K562 (cell line): ENCODE measurements at regions of chr12 and their contacts with region 1.

Region 1: GRCh38 chr12:76621582-76622024 is 62.0 kb upstream of the OSBPL8 start:
- DNase-seq: peak; percentile 66 to 80 (median 70)
- ATAC-seq: peak; percentile 91
- H3K4me3 ChIP-seq: no peak overlapping the region
- H3K27ac ChIP-seq: no peak overlapping the region
- H3K4me1 ChIP-seq: no peaks in the 10 kb centered on the region
- H3K27me3 ChIP-seq: 0 out of 5 replicates have a peak, but pooled peaks cover 0 to 3% of the 10 kb centered on the region in 2 experiments
- CTCF ChIP-seq: peak; percentile 80 to 97 (median 85)
- EP300 ChIP-seq: no peak
- POLR2A ChIP-seq: no peak
- RAD21 ChIP-seq: peak; percentile 98

Region 2: GRCh38 chr12:76426160-76426559 is 195.4 kb before region 1 on chr12:
- CTCF ChIA-PET with region 1: no interaction called
- POLR2A ChIA-PET with region 1: no interaction called
- in situ Hi-C with region 1: no loop called
- intact Hi-C with region 1: no loop called
- DNase-seq: no peak
- ATAC-seq: no peak
- H3K4me3 ChIP-seq: no peak overlapping the region
- H3K27ac ChIP-seq: no peak overlapping the region
- H3K4me1 ChIP-seq: no peaks in the 10 kb centered on the region
- H3K27me3 ChIP-seq: no peaks in the 10 kb centered on the region
- CTCF ChIP-seq: no peak
- EP300 ChIP-seq: no peak
- POLR2A ChIP-seq: no peak
- RAD21 ChIP-seq: no peak

Region 3: DNA sequence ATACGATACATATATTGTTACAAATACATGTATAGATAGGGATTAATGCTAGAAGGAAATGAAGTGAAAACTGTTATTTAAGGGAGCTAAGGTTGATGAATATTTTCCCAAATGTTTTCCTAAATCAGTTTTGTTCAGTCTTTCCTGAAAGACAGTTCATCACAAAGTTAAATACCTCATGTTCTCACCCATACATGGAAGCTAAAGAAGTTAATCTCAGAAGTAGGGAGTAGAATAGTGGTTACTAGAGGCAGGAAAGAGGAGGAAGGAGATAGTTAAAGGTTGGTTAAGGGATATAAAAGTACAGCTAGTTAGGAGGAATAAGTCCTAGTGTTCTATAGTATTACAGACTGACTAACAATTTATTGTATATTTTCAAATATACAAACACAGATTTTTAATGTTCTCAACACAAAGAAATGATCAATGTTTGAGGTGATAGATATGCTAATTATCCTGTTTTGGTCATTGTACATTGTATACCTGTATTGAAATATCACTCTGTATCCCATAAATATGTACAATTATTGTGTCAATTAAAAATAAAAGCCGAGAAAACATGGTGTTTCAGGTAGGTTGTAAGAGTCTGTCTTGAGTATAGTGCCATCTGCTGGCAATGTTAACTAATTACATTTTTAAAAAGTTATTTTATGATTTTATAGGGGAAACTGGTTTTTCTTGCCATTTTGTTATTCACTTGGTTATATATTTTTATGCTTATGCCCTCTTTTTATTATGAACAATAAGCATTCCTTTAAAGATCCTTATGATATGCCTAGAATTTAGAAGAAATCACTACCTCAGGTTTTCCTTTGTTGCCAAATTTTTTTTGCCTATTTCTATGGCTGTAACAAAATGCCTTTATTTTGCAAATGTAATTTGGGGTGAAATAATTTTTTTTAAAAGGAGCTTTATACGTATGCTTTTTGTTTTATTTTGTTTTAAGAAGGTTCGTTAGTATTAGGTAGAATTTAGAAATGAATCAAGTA is 169.3 kb after region 1 on chr12:
- CTCF ChIA-PET with region 1: interaction called, 35 read pairs
- POLR2A ChIA-PET with region 1: no interaction called
- in situ Hi-C with region 1: loop called (anchors 5 kb)
- intact Hi-C with region 1: loop called (anchors 1 kb)
- DNase-seq: peak; percentile 29 to 41 (median 31)
- ATAC-seq: peak; percentile 29; the same call in 1 of the 3 replicates
- H3K4me3 ChIP-seq: no peak overlapping the region
- H3K27ac ChIP-seq: no peak overlapping the region
- H3K4me1 ChIP-seq: peaks cover 4 to 7% of the 10 kb centered on the region in 2 experiments; a peak in 3 of 5 replicates
- H3K27me3 ChIP-seq: no peaks in the 10 kb centered on the region
- CTCF ChIP-seq: peak in 2 of 3 experiments; percentile 60 to 76; a peak in 4 of 6 replicates
- EP300 ChIP-seq: no peak
- POLR2A ChIP-seq: no peak
- RAD21 ChIP-seq: peak; percentile 90 to 91

Region 4: GRCh38 chr12:76820888-76821482 is 199.4 kb after region 1 on chr12:
- CTCF ChIA-PET with region 1: interaction called, 8 read pairs
- POLR2A ChIA-PET with region 1: no interaction called
- in situ Hi-C with region 1: no loop called
- intact Hi-C with region 1: loop called (anchors 1 kb)
- DNase-seq: peak; percentile 21 to 57 (median 28)
- ATAC-seq: peak; percentile 83
- H3K4me3 ChIP-seq: no peak overlapping the region
- H3K27ac ChIP-seq: no peak overlapping the region
- H3K4me1 ChIP-seq: no peaks in the 10 kb centered on the region
- H3K27me3 ChIP-seq: no peaks in the 10 kb centered on the region
- CTCF ChIP-seq: peak; percentile 52 to 59 (median 58); a peak in 5 of 6 replicates
- EP300 ChIP-seq: no peak
- POLR2A ChIP-seq: no peak
- RAD21 ChIP-seq: peak in 1 of 2 experiments; percentile 56; a peak in 1 of 4 replicates

Region 5: DNA sequence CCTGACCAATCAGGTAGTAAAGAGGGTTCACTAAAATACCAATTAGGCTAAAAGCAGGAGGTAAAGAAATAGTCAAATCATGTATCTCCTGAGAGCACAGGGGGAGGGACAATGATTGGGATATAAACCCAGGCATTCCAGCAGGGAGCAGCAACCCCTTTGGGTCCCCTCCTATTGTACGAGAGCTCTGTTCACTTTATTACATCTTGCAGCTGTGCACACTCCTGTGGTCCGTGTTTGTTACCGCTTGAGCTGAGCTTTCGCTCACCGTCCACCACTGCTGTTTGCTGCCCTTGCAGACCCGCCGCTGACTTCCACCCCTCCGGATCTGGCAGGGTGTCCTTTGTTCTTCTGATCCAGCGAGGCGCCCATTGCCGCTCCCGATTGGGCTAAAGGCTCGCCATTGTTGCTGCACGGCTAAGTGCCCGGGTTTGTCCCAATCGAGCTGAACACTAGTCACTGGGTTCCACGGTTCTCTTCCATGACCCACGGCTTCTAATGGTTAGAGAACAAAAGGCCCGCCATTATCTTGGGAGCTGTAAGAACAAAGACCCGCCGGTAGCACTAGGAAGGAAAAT is 379.7 kb after region 1 on chr12:
- CTCF ChIA-PET with region 1: no interaction called
- POLR2A ChIA-PET with region 1: no interaction called
- in situ Hi-C with region 1: loop called (anchors 10 kb)
- intact Hi-C with region 1: no loop called
- DNase-seq: no peak
- ATAC-seq: peak; percentile 71
- H3K4me3 ChIP-seq: 0 out of 2 replicates have a peak overlapping the region, but pooled peaks have one; percentile 19
- H3K27ac ChIP-seq: no peak overlapping the region
- H3K4me1 ChIP-seq: no peaks in the 10 kb centered on the region; a peak in 1 of 5 replicates
- H3K27me3 ChIP-seq: peaks cover 0 to 9% of the 10 kb centered on the region in 2 experiments; a peak in 2 of 5 replicates
- CTCF ChIP-seq: no peak
- EP300 ChIP-seq: no peak
- POLR2A ChIP-seq: no peak
- RAD21 ChIP-seq: 0 out of 4 replicates have a peak, but pooled peaks of 1 of the 2 experiments have one; percentile 9

Region 6: GRCh38 chr12:77925536-77926108 is 1304.0 kb after region 1 on chr12:
- CTCF ChIA-PET with region 1: no interaction called
- POLR2A ChIA-PET with region 1: no interaction called
- in situ Hi-C with region 1: no loop called
- intact Hi-C with region 1: loop called (anchors 5 kb)
- DNase-seq: peak; percentile 9 to 34 (median 33)
- ATAC-seq: peak; percentile 66
- H3K4me3 ChIP-seq: no peak overlapping the region
- H3K27ac ChIP-seq: no peak overlapping the region
- H3K4me1 ChIP-seq: no peaks in the 10 kb centered on the region
- H3K27me3 ChIP-seq: no peaks in the 10 kb centered on the region
- CTCF ChIP-seq: peak; percentile 51 to 83 (median 73)
- EP300 ChIP-seq: no peak
- POLR2A ChIP-seq: no peak
- RAD21 ChIP-seq: peak; percentile 30 to 66; a peak in 3 of 4 replicates